Spleen (tissue), 13 donors: ENCODE measurements at regions of chr3 and their contacts with region 1.

Region 1: DNA sequence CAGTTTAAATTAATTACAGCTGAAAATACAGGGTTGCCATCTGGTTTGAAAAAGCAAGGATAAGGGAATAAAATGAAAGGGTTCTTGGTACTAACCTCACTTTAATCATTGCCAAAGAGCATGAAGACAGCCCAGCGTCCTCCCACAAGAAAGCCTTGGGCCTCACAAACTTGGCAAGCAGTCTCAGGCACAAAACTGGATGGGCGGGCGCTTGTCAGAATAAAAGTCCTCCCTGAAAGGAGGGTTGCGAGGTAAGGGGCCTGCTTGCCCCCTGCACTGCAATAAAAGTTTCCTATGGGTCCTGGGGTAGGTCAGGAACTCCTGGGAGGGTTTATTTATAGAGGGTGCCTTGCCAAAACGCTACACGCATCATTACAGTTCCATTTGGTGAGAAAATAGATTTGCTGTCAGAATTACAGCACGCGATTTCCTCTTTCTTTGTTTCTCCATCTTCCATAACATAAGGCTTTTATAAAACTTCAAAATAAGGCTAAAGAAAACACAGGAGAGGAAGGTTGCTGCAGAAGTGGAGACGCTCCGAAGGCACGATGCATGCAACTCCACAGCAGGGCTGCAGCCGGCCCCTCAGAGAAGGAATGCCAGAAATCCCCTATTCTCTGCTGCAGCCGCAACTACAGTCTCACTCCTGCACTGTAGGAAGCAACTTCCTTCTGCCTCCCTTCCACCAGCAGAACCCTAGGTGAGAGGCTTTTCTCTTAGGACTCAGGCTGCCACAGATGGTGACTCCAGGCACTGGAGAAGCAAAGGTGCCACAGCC is 61.3 kb downstream of the VGLL4 start:
- DNase-seq: no peak
- H3K4me3 ChIP-seq: peak overlapping the region in 6 of 8 donors; percentile 4 to 43 (median 9)
- H3K27ac ChIP-seq: peak overlapping the region in 5 of 8 donors; percentile 50 to 67 (median 58)
- H3K4me1 ChIP-seq: peaks cover 12 to 80% (median 41%) of the 10 kb centered on the region in 6 donors
- H3K27me3 ChIP-seq: no peaks in the 10 kb centered on the region
- CTCF ChIP-seq: no peak
- POLR2A ChIP-seq: no peak

Region 2: DNA sequence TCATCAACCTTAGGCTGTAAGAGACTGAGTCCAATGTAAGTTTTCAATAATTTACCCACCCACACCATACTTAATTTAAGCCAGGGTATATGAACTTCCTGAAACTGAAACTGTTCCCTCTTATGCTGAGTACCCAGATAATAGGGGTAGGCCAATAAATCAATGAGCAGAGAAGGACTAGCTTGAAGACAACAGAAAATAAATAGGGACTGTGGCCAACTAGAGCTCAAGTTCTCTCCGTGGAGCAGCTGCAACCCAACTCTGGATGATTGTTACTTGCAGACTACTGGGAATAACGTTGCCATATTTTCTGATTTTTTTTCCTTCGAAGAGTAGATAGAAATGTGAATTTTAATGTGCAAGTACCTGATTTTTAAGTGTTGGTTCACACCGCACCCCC is 182.2 kb before region 1 on chr3:
- intact Hi-C with region 1: no loop called
- DNase-seq: no peak
- H3K4me3 ChIP-seq: no peak overlapping the region
- H3K27ac ChIP-seq: no peak overlapping the region
- H3K4me1 ChIP-seq: no peaks in the 10 kb centered on the region
- H3K27me3 ChIP-seq: no peaks in the 10 kb centered on the region
- CTCF ChIP-seq: no peak
- POLR2A ChIP-seq: no peak

Region 3: DNA sequence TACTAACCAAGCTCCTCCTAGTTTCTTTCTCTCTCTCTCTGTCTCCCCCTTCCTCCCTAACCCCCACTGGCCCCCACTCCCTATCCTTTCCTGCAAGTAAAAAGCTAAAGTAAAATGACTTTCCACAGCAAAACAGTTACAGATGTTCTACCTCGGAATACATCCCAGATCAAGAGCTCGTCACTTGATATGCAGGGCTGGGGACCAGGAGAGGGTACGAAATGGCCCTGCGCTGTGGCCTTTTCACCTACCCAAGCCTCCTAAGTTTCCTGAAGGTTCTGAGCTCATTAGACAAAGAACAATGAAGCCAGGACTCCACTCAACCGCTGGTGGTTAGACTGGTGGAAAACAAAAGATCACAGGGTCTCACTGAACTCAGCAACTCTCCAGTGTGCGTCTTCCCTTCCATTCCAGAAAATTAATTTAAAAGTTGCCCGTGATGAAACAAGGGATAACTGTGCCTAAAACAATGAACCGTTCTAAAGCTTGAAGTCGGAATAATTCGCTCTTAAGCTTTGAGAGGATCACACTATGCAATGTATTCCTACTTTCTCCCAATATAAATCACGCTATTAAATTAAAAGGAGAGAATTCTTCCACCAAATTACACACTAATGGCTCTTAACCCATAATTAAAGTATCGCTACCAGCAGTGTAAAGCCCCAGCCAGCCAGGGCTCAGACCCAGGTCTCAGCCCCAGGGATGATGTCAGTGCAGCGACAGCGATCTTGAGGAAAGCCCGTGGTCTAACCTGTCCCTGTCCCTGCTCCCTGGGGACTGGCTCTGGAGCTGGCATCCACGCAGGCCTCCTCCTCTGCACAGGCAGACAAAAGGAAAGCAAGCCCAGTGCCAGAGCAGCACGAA is 56.3 kb after region 1 on chr3:
- intact Hi-C with region 1: loop called (anchors 10 kb)
- DNase-seq: no peak
- H3K4me3 ChIP-seq: peak overlapping the region in 2 of 8 donors; percentile 8 to 21
- H3K27ac ChIP-seq: peak overlapping the region in 6 of 8 donors; percentile 20 to 95 (median 76)
- H3K4me1 ChIP-seq: peaks cover 26 to 87% (median 71%) of the 10 kb centered on the region in 6 donors
- H3K27me3 ChIP-seq: no peaks in the 10 kb centered on the region
- CTCF ChIP-seq: no peak
- POLR2A ChIP-seq: no peak

Region 4: GRCh38 chr3:11910971-11911531 is 328.7 kb after region 1 on chr3:
- intact Hi-C with region 1: no loop called
- DNase-seq: no peak
- H3K4me3 ChIP-seq: no peak overlapping the region
- H3K27ac ChIP-seq: no peak overlapping the region
- H3K4me1 ChIP-seq: no peaks in the 10 kb centered on the region
- H3K27me3 ChIP-seq: peaks cover 0 to 14% (median 0%) of the 10 kb centered on the region in 7 donors
- CTCF ChIP-seq: no peak
- POLR2A ChIP-seq: no peak